ENCODE measurements at regions of chr12 and their contacts with region 1.

Region 1: DNA sequence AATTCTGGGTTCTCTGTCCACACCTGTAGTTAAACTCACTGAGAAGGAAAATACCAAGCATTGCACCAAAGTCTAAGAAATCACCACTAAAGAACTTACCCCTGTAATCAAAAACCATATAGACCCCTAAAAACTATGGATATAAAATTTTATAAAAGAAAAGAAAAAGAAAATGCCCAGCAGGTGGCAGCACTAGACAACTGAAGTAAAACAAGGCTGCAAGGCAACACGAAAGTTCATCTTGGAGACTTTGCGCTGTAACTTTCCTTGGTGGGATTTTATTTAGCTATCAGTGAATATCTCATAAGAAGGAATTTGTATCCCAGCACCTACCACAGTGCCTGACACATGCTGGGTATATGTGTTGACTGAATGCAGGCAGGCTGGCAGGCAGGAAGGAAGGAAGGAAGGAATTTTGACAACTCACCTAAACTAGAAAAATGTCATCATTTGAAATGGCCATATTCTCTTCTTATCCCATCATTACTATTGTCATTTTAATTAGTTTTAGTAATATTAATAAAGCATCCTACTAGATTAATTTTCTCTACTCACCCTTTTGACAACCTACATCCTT is 68.2 kb upstream of the ETV6 start:
- DNase-seq: peak; percentile 90
- H3K4me3 ChIP-seq: no peak overlapping the region
- H3K27ac ChIP-seq: no peak overlapping the region
- H3K4me1 ChIP-seq: peaks cover 28% of the 10 kb centered on the region
- H3K27me3 ChIP-seq: no peaks in the 10 kb centered on the region
- CTCF ChIP-seq: peak; percentile 62

Region 2: DNA sequence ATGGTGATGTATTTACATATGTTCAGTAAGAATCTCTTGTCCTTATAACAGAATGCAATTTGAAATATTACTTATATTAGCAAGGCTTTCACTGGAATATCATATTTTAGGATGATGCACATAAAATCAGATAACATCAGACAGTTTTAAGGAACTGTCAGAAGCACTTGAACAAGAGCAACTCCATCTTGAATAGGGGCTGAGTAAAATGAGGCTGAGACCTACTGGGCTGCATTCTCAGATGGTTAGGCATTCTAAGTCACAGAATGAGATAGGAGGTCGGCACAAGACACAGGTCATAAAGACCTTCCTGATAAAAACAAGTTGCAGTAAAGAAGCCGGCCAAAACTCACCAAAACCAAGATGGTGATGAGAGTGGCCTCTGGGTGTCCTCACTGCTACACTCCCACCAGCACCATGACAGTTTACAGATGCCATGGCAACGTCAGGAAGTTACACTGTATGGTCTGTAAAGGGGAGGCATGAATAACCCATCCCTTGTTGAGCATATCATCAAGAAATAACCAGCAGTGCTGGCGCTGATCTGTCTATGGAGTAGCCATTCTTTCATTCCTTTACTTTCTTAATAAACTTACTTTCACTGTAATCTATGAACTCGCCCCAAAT is 40.6 kb after region 1 on chr12:
- CTCF ChIA-PET with region 1: interaction called, 7 read pairs
- POLR2A ChIA-PET with region 1: no interaction called
- intact Hi-C with region 1: loop called (anchors 2 kb)
- DNase-seq: peak; percentile 42
- H3K4me3 ChIP-seq: no peak overlapping the region
- H3K27ac ChIP-seq: no peak overlapping the region
- H3K4me1 ChIP-seq: no peaks in the 10 kb centered on the region
- H3K27me3 ChIP-seq: no peaks in the 10 kb centered on the region
- CTCF ChIP-seq: no peak

Region 3: GRCh38 chr12:11719678-11720099 is 138.4 kb after region 1 on chr12:
- CTCF ChIA-PET with region 1: no interaction called
- POLR2A ChIA-PET with region 1: no interaction called
- intact Hi-C with region 1: loop called (anchors 10 kb)
- DNase-seq: peak; percentile 96
- H3K4me3 ChIP-seq: no peak overlapping the region
- H3K27ac ChIP-seq: peak overlapping the region; percentile 80
- H3K4me1 ChIP-seq: peaks cover 67% of the 10 kb centered on the region
- H3K27me3 ChIP-seq: no peaks in the 10 kb centered on the region
- CTCF ChIP-seq: no peak

Region 4: DNA sequence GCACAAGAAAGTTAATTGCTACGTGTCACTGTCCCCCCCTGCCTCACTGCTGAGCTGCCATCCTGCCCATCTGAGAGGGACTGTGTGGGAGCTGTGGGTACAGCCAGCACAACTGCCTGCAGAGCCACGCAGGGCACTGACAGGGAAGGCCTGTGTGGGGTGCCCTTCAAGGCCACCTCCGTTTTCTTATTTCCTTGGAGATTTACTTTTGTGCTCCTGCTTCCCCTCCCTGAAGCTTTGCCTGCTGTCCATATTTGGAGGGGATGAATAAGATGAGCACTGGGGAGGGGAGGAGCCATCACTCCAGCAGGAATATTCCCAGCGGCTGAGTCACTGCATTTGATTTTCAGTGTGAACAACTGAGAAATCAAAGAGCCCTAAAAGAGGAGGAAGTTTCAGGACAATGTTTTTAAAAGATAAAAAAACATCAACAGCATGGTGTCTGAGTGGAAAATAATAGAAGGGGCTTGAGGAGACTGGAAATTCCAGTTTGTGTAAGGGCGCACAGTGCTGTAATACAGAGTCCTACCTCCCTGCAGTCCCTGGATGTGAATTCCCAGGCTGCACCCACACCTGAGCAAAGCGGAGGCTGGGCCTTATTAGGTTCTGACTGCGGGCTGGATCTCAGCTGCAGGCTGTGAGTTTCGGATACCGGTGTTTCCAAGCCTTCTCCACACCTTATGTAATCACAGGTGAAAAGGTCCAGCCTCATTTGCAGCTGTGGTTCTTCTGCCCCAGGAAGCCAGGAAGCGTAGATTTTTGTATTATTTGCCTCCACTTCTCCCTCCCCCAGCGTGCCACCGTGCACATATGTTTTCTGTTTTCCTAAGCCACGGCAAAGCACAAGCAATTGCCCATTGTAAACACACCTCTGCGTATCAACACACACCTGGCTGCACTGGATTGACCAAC is 296.9 kb after region 1 on chr12:
- CTCF ChIA-PET with region 1: no interaction called
- POLR2A ChIA-PET with region 1: no interaction called
- intact Hi-C with region 1: loop called (anchors 5 kb)
- DNase-seq: peak; percentile 84
- H3K4me3 ChIP-seq: no peak overlapping the region
- H3K27ac ChIP-seq: peak overlapping the region; percentile 73
- H3K4me1 ChIP-seq: peaks cover 49% of the 10 kb centered on the region
- H3K27me3 ChIP-seq: no peaks in the 10 kb centered on the region
- CTCF ChIP-seq: no peak

Region 5: DNA sequence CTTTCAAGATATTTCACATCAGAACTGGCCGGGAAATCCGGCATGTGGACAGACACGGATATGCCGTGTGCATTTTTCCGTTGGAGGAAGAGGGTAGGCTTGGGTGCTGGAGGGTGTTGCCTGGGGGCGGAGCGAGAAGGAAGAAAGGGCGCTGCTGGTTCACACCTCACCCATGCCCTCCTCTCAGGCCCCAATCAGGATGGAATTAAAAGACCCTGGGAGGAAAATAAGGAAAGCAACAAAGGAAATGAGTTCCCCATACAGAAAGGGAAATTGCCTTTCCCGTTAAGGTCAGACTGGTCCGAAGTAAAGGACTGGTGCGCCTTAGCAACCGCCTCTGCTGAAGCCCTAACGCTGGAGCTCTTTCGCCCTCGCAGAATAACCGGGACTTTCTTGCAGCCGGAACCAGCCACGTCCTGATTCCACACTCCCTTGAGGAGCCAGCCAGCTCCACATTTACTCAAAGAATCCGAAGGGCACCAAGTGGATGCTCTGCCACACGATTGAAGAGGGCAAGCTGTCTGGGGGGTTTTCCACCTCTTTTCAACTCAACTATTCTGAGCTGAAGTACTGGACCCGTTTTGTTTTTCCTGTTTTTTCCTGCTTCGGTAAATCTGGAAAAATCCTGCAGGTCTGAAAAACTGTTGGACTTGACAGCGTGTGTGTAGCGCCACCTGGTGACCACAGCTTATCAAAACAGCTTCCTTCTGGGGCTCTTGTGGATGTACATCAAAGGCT is 451.8 kb after region 1 on chr12:
- CTCF ChIA-PET with region 1: interaction called, 48 read pairs
- POLR2A ChIA-PET with region 1: no interaction called
- intact Hi-C with region 1: loop called (anchors 1 kb)
- DNase-seq: peak; percentile 84
- H3K4me3 ChIP-seq: peak overlapping the region; percentile 33
- H3K27ac ChIP-seq: peak overlapping the region; percentile 43
- H3K4me1 ChIP-seq: peaks cover 5% of the 10 kb centered on the region
- H3K27me3 ChIP-seq: no peaks in the 10 kb centered on the region
- CTCF ChIP-seq: peak; percentile 91